Adrenal gland (tissue), 19 donors: ENCODE measurements at regions of chr19 and their contacts with region 1.

Region 1: DNA sequence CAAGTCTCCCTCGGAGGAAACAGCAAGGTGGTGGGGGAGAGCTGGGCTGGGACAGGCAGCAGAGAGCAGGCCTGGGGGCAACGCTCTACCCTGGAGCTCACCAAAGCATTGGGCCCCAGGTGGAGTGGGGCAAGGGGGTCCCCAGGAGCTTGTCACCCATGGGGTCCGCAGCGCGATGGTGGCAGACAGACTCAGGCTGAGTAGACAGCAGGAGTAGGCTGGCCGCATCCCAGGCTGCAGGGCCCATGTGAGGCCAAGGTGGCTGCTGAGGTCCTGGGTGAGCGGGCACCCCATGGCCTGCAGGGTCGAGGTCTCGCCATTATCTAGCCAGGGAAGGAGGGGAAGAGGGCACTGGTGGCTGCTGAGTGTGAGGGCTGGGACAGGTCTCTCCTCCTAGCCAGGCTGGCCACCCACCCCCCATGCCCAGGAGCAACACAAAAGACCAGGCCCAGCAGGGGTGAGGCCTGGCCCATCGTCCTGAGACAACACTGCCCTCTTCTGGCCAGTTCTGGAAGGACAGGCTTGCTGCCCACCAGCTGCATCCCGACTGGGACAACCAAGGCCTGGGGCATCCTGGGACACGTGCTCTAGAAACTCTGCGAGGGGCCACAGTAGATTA is 33.1 kb downstream of the CEBPG start:
- DNase-seq: peak; percentile 52 to 87 (median 72)
- H3K4me3 ChIP-seq: no peak overlapping the region
- H3K27ac ChIP-seq: no peak overlapping the region
- H3K4me1 ChIP-seq: no peaks in the 10 kb centered on the region
- H3K27me3 ChIP-seq: no peaks in the 10 kb centered on the region
- CTCF ChIP-seq: peak; percentile 90 to 96 (median 92)
- POLR2A ChIP-seq: no peak

Region 2: GRCh38 chr19:33241530-33242101 is 165.0 kb before region 1 on chr19:
- intact Hi-C with region 1: loop called (anchors 2 to 5 kb)
- DNase-seq: peak in 1 of 7 donors; percentile 38
- H3K4me3 ChIP-seq: no peak overlapping the region
- H3K27ac ChIP-seq: no peak overlapping the region
- H3K4me1 ChIP-seq: no peaks in the 10 kb centered on the region
- H3K27me3 ChIP-seq: no peaks in the 10 kb centered on the region
- CTCF ChIP-seq: peak; percentile 29 to 82 (median 69)
- POLR2A ChIP-seq: no peak

Region 3: GRCh38 chr19:33368074-33368864 is 38.4 kb before region 1 on chr19:
- intact Hi-C with region 1: no loop called
- DNase-seq: no peak
- H3K4me3 ChIP-seq: no peak overlapping the region
- H3K27ac ChIP-seq: no peak overlapping the region
- H3K4me1 ChIP-seq: no peaks in the 10 kb centered on the region
- H3K27me3 ChIP-seq: no peaks in the 10 kb centered on the region
- CTCF ChIP-seq: no peak
- POLR2A ChIP-seq: no peak

Region 4: DNA sequence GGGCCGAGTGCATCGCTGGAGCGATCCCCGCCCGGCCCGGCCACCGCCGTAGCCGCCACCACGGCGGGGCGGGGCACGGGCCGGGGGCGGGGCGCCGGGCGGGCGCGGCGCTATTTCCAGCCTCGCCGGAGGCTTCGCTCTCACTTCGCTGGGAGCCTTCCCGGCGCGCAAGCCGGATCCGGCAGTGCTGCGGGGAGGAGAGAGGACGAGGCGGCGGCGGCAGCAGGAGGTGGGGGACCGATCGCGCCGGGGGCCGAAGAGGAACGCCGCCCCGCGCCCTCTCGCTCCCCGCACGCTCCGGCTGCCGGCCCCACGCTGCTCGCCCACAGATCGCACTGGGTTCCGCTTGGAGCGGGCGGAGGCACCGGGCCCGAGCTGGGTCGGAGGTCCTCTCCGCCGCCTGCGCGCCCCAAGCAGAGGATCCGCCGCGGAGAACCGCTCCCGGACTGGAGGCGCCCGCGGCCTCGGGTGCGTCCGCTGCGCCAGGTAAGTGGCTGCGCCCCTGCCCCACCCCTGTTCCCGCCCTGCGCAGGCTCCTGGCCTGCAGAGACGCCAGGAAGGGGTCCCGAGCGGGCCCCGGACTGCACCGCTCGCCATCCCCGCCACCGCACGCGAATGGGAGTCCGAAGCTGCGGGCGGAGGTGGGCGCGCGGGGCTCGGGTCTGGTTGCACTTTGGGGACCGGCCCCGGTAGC is 215.3 kb after region 1 on chr19 and contains the start of gene CHST8:
- intact Hi-C with region 1: no loop called
- DNase-seq: peak in 3 of 7 donors; percentile 4 to 33 (median 18)
- H3K4me3 ChIP-seq: peak within 1 kb of the TSS in 1 of 4 donors; percentile 17
- H3K27ac ChIP-seq: no peak within 1 kb of the TSS
- H3K4me1 ChIP-seq: peaks cover 5 to 7% of the 10 kb centered on the region in 2 donors
- H3K27me3 ChIP-seq: peaks cover 40% of the 10 kb centered on the region
- CTCF ChIP-seq: no peak
- POLR2A ChIP-seq: no peak
- total RNA-seq, gene CHST8: 0.06 to 1.2 (median 0.54) TPM in 5 of 9 donors, not detected in the others